ENCODE measurements at regions of chr1 and their contacts with region 1.

Region 1: GRCh38 chr1:39816415-39817090 is 27.9 kb upstream of the BMP8B start:
- DNase-seq: peak; percentile 67
- H3K4me3 Mint-ChIP-seq: peak overlapping the region; percentile 24
- H3K27ac Mint-ChIP-seq: no peak overlapping the region
- H3K4me1 Mint-ChIP-seq: peaks cover 11% of the 10 kb centered on the region
- H3K27me3 Mint-ChIP-seq: peaks cover 44% of the 10 kb centered on the region

Region 2: DNA sequence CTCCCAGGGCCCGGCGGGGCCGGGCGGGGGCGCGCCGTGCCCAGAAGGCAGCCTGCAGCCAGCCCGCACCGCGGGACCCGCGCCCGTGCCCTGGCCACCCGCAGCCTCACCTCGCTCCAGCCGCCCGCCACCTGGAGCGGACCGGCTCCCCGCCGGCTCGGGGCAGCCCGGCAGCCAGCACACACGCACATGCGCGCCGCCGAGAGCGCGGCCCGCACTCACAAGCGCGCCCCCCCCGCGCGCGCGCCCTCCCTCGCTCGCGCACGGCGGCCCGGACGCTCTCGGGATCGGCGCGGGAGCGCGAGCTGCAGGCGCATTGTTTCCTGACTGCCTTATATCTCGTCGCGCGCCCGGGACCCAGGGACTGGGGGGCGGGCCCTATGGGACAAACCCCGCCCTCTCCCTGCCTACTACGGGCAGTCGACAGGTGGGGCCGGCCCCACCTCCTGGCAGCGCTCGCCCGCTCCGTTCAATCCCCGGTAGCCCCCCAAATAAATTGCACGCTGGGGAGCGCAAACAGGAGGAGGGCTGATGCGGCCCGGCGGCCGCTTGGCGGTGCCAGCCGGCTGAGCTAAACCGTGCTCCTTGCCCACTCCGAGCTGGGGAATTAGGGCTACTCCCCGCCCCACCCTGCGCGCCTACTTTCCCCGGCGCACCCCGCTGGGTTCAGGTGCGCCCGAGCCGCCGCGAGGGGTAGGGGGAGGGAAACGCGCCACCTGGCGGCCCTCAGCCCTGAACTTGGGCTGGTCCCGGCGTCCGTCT is 85.3 kb after region 1 on chr1 and contains the start of gene MYCL:
- CTCF ChIA-PET with region 1: interaction called, 37 read pairs
- DNase-seq: peak; percentile 85
- H3K4me3 Mint-ChIP-seq: peak within 1 kb of the TSS; percentile 75
- H3K27ac Mint-ChIP-seq: no peak within 1 kb of the TSS
- H3K4me1 Mint-ChIP-seq: peaks cover 6% of the 10 kb centered on the region
- H3K27me3 Mint-ChIP-seq: peaks cover 92% of the 10 kb centered on the region

Region 3: GRCh38 chr1:40032240-40032891 is 215.8 kb after region 1 on chr1:
- CTCF ChIA-PET with region 1: interaction called, 10 read pairs
- DNase-seq: peak; percentile 69
- H3K4me3 Mint-ChIP-seq: no peak overlapping the region
- H3K27ac Mint-ChIP-seq: peak overlapping the region; percentile 20
- H3K4me1 Mint-ChIP-seq: peaks cover 54% of the 10 kb centered on the region
- H3K27me3 Mint-ChIP-seq: no peaks in the 10 kb centered on the region

Measured in activated naive CD4-positive, alpha-beta T cell treated with anti-CD3 and anti-CD28 coated beads, Interleukin-2, amount 10 ng/mL, durations not matched to agents 7 days and 5 days (primary cell).